ENCODE measurements at regions of chr4 and their contacts with region 1.

Region 1: DNA sequence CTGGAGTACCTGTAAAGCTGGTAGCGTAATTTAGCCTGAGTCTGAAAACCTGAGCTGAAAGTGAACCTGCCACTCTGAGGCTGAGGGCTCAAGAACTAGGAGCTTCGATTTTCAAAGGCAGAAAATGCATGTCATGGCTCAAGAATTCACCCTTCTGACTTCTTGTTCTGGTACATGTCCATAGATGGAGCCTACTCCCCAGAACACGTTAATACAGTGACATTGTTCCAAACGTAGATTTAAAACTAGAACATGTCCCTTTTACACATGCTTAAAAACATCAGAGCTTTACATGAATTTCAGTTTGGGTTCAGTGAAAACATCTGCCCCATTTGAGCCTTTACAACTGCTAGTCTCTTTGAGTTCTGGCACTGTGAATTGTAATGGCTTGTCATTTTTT is 115.5 kb upstream of the WDR1 start:
- DNase-seq: no peak
- ATAC-seq: no peak
- H3K4me3 ChIP-seq: no peak overlapping the region
- H3K27ac ChIP-seq: no peak overlapping the region
- H3K4me1 ChIP-seq: no peaks in the 10 kb centered on the region
- H3K27me3 ChIP-seq: no peaks in the 10 kb centered on the region
- CTCF ChIP-seq: no peak

Region 2: DNA sequence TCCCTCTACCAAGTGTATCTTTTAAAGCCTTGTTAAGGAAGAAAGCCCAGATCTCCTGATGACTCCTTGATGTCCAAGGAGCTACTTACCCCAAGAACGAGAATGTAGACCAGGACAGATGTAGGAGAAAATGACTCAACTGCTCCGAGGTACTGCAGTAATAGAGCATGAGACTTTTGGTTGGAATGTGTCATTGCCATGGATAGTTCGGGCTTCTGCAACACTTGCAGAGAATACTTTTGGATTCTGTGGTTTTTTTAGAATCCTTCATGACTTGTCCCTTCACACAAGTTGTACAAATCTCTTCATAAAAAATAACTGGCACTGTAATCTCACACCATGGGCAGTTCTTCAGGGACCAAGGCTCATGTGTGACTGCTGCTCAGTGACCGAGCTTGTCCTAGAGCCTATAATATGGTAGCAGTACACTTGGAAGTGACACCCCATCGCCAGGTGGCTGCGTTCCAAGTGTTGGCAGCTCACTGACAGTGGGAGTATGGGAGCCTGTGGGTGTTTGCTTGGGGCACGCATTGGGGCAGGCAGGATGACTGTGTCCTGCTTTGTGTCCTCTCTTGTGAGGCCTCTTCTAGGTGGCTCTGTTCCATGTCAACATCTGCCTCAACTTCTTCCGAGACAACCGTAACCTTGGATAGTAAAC is 27.6 kb before region 1 on chr4:
- intact Hi-C with region 1: loop called (anchors 2 kb)
- DNase-seq: no peak
- ATAC-seq: no peak
- H3K4me3 ChIP-seq: no peak overlapping the region
- H3K27ac ChIP-seq: no peak overlapping the region
- H3K4me1 ChIP-seq: no peaks in the 10 kb centered on the region
- H3K27me3 ChIP-seq: no peaks in the 10 kb centered on the region
- CTCF ChIP-seq: no peak

Region 3: GRCh38 chr4:10380735-10381134 is 148.6 kb after region 1 on chr4:
- intact Hi-C with region 1: no loop called
- DNase-seq: no peak
- ATAC-seq: no peak
- H3K4me3 ChIP-seq: no peak overlapping the region
- H3K27ac ChIP-seq: no peak overlapping the region
- H3K4me1 ChIP-seq: no peaks in the 10 kb centered on the region
- H3K27me3 ChIP-seq: no peaks in the 10 kb centered on the region
- CTCF ChIP-seq: no peak

Region 4: DNA sequence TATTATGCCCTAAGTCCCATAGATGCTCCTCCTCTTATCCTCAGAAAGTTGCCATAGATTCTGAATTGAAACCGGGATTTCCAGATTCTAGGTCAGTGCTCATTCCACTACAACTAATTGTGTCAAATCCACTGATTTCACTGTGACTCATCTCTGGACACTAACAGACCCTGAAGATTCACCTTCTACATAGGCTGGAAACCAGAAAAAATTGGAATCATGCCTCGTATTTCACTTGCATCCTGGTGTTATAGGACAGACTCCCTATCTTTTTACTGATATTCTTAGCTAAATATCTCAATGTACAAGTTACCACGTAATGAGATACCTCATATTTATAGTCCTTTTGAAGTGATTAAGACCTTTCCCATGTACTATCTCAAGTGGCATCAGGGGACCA is 415.7 kb after region 1 on chr4:
- intact Hi-C with region 1: no loop called
- DNase-seq: no peak
- ATAC-seq: no peak
- H3K4me3 ChIP-seq: no peak overlapping the region
- H3K27ac ChIP-seq: no peak overlapping the region
- H3K4me1 ChIP-seq: no peaks in the 10 kb centered on the region
- H3K27me3 ChIP-seq: no peaks in the 10 kb centered on the region
- CTCF ChIP-seq: no peak

Measured in upper lobe of right lung (tissue), 1 donor.